ENCODE measurements at regions of chr22 and their contacts with region 1.

Region 1: DNA sequence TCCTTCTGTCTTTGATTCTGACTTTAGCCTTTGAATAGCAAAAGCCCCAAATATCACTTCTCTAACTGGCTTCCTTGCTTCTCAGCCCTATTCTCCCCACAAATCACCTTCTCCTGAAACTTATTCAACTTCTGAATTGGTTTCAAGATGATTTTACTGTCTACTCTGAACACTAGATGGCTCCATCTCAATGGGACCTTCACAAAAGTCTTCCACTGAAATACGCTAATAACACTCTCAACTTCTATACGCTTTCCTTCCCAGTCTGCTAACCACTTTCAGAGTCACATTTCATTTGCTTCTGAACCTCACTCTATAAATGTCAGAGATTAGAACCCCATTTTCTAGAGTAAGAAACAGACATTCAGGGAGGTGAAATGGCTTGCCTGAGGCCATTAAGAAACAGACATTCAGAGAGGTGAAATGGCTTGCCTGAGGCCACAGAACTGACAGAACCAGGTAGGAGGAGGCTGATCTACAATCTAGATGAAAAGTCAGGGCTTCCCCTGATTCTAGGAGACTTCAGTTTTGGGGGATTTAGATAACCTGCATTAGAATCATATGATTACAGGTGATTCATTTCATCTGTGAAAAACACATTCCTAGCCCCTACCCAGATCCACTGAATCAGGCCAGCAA is 20.6 kb downstream of the MORC2 start:
- DNase-seq: no peak
- ATAC-seq: peak; percentile 65 to 82 (median 70)
- H3K4me3 ChIP-seq: no peak overlapping the region
- H3K27ac ChIP-seq: no peak overlapping the region
- H3K4me1 ChIP-seq: no peaks in the 10 kb centered on the region
- H3K27me3 ChIP-seq: no peaks in the 10 kb centered on the region
- CTCF ChIP-seq: peak; percentile 50 to 61 (median 54)
- POLR2A ChIP-seq: no peak

Region 2: DNA sequence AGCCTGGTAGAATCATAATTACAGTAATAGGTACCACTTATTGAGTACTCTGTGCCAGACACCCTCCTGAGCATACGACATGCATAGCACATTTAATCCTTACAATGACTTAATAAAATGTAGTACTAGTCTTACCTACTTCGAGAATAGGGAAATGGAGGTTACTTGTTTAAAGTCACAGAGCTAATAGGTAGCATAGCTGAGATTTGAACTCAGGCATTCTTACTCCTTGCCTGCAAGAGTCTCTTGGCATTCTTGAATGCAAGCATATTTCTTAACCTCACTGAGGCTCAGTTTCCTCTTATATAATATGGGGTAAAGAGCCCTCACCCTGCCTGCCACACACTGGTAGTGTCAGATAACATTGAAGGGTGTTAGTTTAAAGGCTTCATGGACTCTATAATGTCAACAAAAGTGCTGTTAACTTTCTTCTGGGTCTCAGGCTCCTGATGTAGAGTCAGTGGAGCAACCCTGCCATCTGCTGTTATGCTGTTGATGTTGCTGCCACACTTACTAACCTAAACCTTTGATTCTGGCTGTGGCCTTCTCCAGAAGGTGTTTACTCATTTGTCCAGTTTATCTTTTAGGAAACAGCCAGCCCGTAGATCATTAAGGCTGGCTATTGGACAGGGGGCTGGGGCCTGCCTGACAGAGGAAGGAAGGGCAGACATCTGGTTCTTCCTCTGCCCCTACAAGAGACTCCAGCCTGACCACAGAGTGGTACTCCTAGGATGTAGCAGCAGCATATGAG is 283.1 kb after region 1 on chr22:
- intact Hi-C with region 1: loop called in 1 of 2 experiments (anchors 10 kb)
- DNase-seq: peak in 2 of 3 donors; percentile 38 to 67
- ATAC-seq: peak; percentile 69 to 91 (median 83)
- H3K4me3 ChIP-seq: no peak overlapping the region
- H3K27ac ChIP-seq: peak overlapping the region; percentile 71 to 85 (median 78)
- H3K4me1 ChIP-seq: peaks cover 0 to 41% (median 19%) of the 10 kb centered on the region in 4 donors
- H3K27me3 ChIP-seq: no peaks in the 10 kb centered on the region
- CTCF ChIP-seq: peak; percentile 83 to 90 (median 86)
- POLR2A ChIP-seq: no peak